Heart right ventricle (tissue), 16 donors: ENCODE measurements at regions of chr1 and their contacts with region 1.

Region 1: GRCh38 chr1:20037877-20038276 is 32.1 kb upstream of the PLA2G5 start:
- DNase-seq: no peak
- ATAC-seq: peak in 2 of 8 donors; percentile 25 to 29
- H3K4me3 ChIP-seq: no peak overlapping the region
- H3K27ac ChIP-seq: peak overlapping the region in 6 of 10 donors; percentile 23 to 58 (median 40)
- H3K4me1 ChIP-seq: peaks cover 0 to 26% (median 3%) of the 10 kb centered on the region in 9 donors
- H3K27me3 ChIP-seq: no peaks in the 10 kb centered on the region
- CTCF ChIP-seq: no peak

Region 2: GRCh38 chr1:20080441-20081352 is 42.8 kb after region 1 on chr1:
- intact Hi-C with region 1: loop called in 1 of 10 experiments (anchors 10 kb)
- DNase-seq: no peak
- ATAC-seq: peak in 4 of 8 donors; percentile 23 to 52 (median 40)
- H3K4me3 ChIP-seq: no peak overlapping the region
- H3K27ac ChIP-seq: peak overlapping the region in 9 of 10 donors; percentile 21 to 49 (median 32)
- H3K4me1 ChIP-seq: peaks cover 3 to 70% (median 15%) of the 10 kb centered on the region in 9 donors
- H3K27me3 ChIP-seq: peaks cover 0 to 17% (median 0%) of the 10 kb centered on the region in 7 donors
- CTCF ChIP-seq: no peak